Mucosa of descending colon (tissue), 3 donors: ENCODE measurements at regions of chr5 and their contacts with region 1.

Region 1: GRCh38 chr5:60699530-60700382 is at the start of gene DEPDC1B:
- DNase-seq: peak; percentile 90 to 93 (median 90)
- ATAC-seq: peak; percentile 98
- H3K4me3 ChIP-seq: peak within 1 kb of the TSS; percentile 29
- H3K4me1 ChIP-seq: peaks cover 9% of the 10 kb centered on the region
- CTCF ChIP-seq: no peak
- total RNA-seq, gene DEPDC1B: 3.4 to 9.8 (median 4.5) TPM

Region 2: GRCh38 chr5:60843936-60844905 is 144.5 kb after region 1 on chr5 and contains the start of gene ELOVL7:
- intact Hi-C with region 1: loop called in 1 of 2 experiments (anchors 10 kb)
- DNase-seq: peak; percentile 89 to 92 (median 90)
- ATAC-seq: peak; percentile 97
- H3K4me3 ChIP-seq: peak within 1 kb of the TSS; percentile 52
- H3K4me1 ChIP-seq: no peaks in the 10 kb centered on the region
- CTCF ChIP-seq: no peak
- total RNA-seq, gene ELOVL7: 8.9 to 33.7 (median 15.9) TPM